G401 (cell line): ENCODE measurements at regions of chr2 and their contacts with region 1.

Region 1: DNA sequence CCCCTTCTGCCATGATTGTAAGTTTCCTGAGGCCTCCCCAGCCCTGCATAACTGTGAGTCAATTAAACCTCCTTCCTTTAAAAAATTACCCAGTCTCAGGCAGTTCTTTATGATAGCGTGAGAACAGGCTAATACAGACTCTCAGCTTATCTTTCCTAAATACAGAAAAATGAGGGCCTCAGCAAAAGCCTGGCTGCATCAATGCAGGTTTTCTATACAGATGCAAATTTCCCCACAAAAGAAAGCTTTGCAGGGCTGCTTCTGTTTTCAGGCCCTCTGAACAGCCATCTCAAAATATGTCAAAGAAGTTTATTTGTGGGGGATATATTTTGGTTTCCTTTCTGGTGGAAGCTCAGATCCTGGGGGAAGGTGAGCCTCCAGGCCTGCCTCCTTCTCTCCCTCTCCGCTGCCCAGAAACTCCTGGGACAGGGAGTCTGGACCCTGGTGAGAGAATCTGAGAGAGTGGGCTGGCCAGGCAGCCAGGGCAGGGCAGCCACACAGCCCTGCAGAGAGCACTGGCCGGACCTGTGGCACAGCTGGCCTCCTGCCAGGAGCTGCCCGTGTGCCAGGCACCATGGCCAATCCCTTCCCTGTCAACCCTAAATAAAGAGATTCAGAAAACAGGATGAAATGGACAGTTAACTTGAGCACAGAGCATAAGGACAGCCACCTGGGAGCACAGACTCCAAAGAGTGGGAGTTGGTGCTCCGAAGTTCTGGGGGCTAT is 21.6 kb upstream of the AGXT start:
- DNase-seq: peak; percentile 57

Region 2: GRCh38 chr2:240893363-240893844 is 46.4 kb after region 1 on chr2:
- in situ Hi-C with region 1: loop called (anchors 5 kb)
- DNase-seq: no peak